ENCODE measurements at regions of chr22 and their contacts with region 1.

Region 1: GRCh38 chr22:35921777-35922176 is 106.8 kb downstream of the RBFOX2 start:
- DNase-seq: peak; percentile 93
- H3K4me3 Mint-ChIP-seq: no peak overlapping the region
- H3K27ac Mint-ChIP-seq: no peak overlapping the region
- H3K4me1 Mint-ChIP-seq: peaks cover 27% of the 10 kb centered on the region
- H3K27me3 Mint-ChIP-seq: no peaks in the 10 kb centered on the region
- CTCF ChIP-seq: peak; percentile 72

Region 2: DNA sequence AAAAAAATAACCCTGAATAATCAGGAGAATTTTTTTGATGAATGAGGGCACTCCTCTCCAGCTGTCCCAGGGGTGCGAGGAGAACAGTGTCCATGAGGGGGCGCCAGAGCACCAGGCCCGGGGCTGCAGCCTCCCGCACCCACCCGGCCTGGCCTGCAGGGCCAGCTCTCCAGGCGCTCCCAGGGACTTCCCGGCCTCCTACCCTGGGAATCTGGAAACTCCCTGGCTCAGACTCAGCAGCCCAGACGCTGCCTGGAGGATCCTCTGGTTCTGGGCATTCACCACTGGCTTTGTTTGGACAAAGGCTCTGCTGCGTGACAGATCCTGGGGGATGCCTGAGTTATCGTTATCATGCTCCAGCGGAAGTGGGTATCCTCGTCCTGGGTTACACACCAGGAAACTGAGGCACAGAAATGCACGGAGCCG is 490.9 kb before region 1 on chr22:
- CTCF ChIA-PET with region 1: no interaction called
- POLR2A ChIA-PET with region 1: no interaction called
- intact Hi-C with region 1: loop called (anchors 5 kb)
- DNase-seq: peak; percentile 84
- H3K4me3 Mint-ChIP-seq: no peak overlapping the region
- H3K27ac Mint-ChIP-seq: no peak overlapping the region
- H3K4me1 Mint-ChIP-seq: peaks cover 10% of the 10 kb centered on the region
- H3K27me3 Mint-ChIP-seq: no peaks in the 10 kb centered on the region
- CTCF ChIP-seq: peak; percentile 94

Region 3: DNA sequence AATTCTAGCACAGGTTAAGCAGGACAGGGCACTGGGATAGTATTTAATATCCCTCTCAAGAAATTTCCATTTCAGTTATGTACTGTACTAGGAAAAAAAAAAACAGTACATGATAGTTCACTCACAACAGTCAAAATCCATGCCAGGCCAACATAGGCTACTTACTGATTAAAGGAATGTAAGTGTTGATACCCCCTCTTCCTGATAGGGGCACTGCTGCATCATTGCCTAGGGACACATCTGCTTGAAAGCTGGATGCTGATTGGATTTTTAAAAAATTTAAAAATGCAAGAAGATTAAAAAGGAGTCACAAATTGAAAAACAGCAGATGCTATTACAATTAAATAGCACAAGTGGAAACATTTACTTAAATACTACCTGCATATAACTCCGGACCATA is 160.7 kb before region 1 on chr22:
- CTCF ChIA-PET with region 1: interaction called, 3 read pairs
- POLR2A ChIA-PET with region 1: no interaction called
- intact Hi-C with region 1: loop called (anchors 1 kb)
- DNase-seq: peak; percentile 36
- H3K4me3 Mint-ChIP-seq: no peak overlapping the region
- H3K27ac Mint-ChIP-seq: peak overlapping the region; percentile 23
- H3K4me1 Mint-ChIP-seq: no peaks in the 10 kb centered on the region
- H3K27me3 Mint-ChIP-seq: no peaks in the 10 kb centered on the region
- CTCF ChIP-seq: peak; percentile 34

Region 4: DNA sequence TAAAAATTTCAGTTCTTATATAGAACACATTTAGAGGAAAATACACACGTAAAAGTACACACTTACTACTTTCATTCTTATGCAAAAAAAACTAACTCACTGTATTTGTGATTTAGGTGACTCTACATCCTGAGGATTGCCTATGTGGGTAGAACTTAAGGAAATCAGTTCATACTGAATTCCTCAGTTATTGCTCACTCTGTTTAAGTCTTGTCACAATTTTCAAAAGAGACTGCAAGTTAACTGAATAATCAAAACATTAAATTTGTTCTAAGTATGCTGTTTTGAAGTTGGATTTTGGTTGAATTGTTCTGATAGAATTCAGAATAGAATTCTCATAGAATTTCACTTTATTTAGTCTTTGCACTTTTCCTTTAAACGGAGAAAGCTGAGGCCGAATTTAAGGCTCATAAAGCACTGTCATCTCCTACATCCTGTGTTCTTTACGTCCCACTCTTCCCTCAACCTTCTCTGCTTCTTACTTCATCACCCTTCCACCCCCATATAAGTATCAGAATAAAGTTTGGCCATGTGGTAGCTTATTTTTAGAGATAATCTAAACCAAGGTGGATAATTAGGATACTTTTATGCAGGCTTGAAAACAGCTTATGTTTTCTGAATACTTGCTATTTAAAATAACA is 144.3 kb before region 1 on chr22:
- CTCF ChIA-PET with region 1: interaction called, 6 read pairs
- POLR2A ChIA-PET with region 1: interaction called, 3 read pairs
- intact Hi-C with region 1: loop called (anchors 1 kb)
- DNase-seq: peak; percentile 51
- H3K4me3 Mint-ChIP-seq: peak overlapping the region; percentile 6
- H3K27ac Mint-ChIP-seq: peak overlapping the region; percentile 83
- H3K4me1 Mint-ChIP-seq: peaks cover 7% of the 10 kb centered on the region
- H3K27me3 Mint-ChIP-seq: no peaks in the 10 kb centered on the region
- CTCF ChIP-seq: no peak

Region 5: DNA sequence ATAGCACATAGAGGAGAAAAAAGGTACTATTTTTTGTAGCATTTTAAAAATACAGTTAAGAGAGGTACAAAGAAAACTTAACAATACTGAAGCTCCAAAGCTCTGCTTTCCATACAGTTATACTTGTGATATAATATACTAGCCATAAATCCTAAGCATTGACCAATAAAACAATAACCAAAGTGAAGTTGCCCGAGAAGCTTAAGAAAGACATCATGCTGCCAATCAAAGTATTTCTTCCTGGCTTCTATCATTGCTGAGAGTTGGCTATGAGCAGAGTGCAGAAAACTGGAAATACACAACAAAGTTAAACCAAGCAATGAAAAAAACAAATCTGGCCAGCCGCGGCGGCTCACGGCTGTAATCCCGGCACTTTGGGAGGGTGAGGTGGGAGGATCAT is 22.7 kb after region 1 on chr22:
- CTCF ChIA-PET with region 1: no interaction called
- POLR2A ChIA-PET with region 1: no interaction called
- intact Hi-C with region 1: no loop called
- DNase-seq: no peak
- H3K4me3 Mint-ChIP-seq: no peak overlapping the region
- H3K27ac Mint-ChIP-seq: no peak overlapping the region
- H3K4me1 Mint-ChIP-seq: peaks cover 5% of the 10 kb centered on the region
- H3K27me3 Mint-ChIP-seq: no peaks in the 10 kb centered on the region
- CTCF ChIP-seq: no peak